Naive thymus-derived CD4-positive, alpha-beta T cell (primary cell): ENCODE measurements at regions of chr2 and their contacts with region 1.

Region 1: DNA sequence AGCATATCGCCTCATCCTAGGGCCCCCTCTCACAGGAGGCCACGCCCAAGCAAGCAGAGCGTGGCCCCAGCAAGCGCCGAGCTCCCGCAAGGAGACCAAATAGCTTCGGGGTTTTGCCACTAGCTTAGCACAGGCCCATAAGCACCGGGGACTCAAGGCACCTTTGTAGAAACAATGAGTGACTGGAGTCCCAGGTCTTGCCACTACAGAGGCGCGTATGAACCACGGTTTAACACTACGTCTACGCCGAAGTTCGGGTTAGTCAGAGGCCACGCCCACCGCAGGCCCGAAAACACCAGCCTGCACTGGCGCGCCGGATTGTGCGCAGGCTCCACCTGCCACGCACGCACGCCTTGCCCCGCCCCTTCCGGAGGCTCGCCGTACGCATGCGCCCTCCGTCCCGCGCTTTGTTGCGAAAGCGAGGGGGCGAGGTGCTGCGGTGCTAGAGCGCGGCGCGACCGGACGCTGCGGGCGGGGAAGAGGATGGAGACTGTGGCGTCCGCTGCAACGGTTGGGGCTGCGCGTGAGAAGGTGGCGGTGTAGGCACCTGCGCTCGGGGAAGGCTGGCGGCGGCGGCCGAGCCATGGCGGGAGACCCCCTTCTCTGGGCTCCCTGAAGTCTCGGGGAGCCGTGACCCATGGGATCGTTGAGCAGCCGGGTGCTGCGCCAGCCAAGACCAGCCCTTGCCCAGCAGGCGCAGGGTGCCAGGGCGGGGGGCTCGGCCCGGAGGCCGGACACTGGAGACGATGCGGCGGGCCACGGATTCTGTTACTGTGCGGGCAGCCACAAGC is at the start of gene GMCL1:
- DNase-seq: peak; percentile 98 to 100 (median 99)
- ATAC-seq: peak; percentile 97
- H3K4me3 ChIP-seq: peak within 1 kb of the TSS; percentile 81
- H3K4me3 Mint-ChIP-seq: peak within 1 kb of the TSS; percentile 83 to 97 (median 94)
- H3K27ac ChIP-seq: peak within 1 kb of the TSS; percentile 88
- H3K27ac Mint-ChIP-seq: peak within 1 kb of the TSS; percentile 89 to 97 (median 95)
- H3K4me1 ChIP-seq: peaks cover 10 to 17% of the 10 kb centered on the region in 2 donors
- H3K4me1 Mint-ChIP-seq: peaks cover 31 to 61% (median 54%) of the 10 kb centered on the region in 7 donors
- H3K27me3 ChIP-seq: no peaks in the 10 kb centered on the region
- H3K27me3 Mint-ChIP-seq: no peaks in the 10 kb centered on the region
- total RNA-seq, gene GMCL1: 24.9 to 30.5 (median 27.3) TPM

Region 2: DNA sequence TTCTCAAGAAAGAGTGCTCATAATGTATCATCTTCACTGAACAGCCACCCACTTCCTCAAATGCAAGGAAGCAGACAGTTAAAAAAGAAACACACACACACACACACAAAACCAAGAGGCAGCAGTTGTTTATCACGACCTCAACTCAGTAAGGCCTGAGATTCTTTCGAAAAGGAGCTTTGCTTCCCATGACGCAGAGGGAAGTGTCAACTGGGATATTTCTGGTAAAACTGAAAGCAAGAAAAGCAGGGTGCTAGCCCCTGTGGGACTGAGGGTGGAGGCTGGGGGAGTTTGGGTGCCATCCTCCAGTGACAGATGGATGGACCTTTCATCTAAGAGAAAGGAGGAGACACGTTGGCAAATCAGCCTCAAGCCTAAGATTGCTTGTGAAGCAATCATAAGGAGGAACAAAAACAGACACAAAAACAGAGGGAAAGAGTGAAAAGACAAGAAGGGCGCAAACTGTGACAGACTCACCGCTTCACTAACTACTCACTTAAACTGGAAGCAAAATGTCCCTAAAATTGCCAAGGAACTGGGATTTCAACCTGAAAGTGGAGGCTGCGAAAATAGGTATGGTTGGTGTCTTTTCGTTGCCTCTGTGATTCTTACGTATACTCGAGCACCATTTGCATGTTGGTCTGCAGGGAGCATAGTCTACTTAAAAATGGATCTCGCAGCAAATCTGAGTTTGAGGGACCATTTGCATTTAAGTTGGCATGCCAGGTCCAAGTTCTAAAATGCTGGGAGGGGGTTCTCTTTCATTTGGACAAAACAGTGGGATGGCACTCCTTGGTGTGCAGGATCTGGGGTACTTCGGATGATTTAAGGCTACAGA is 1094.5 kb before region 1 on chr2 and contains the start of gene ARHGAP25:
- CTCF ChIA-PET with region 1: no interaction called
- POLR2A ChIA-PET with region 1: no interaction called
- intact Hi-C with region 1: loop called in 1 of 2 experiments (anchors 5 kb)
- DNase-seq: peak; percentile 20 to 81 (median 69)
- ATAC-seq: peak; percentile 78
- H3K4me3 ChIP-seq: peak within 1 kb of the TSS; percentile 77
- H3K4me3 Mint-ChIP-seq: no peak within 1 kb of the TSS
- H3K27ac ChIP-seq: peak within 1 kb of the TSS; percentile 78
- H3K27ac Mint-ChIP-seq: no peak within 1 kb of the TSS
- H3K4me1 ChIP-seq: peaks cover 38 to 48% of the 10 kb centered on the region in 2 donors
- H3K4me1 Mint-ChIP-seq: peaks cover 23 to 37% (median 32%) of the 10 kb centered on the region in 7 donors
- H3K27me3 ChIP-seq: no peaks in the 10 kb centered on the region
- H3K27me3 Mint-ChIP-seq: no peaks in the 10 kb centered on the region
- total RNA-seq, gene ARHGAP25: 68.2 to 139 (median 116) TPM

Region 3: DNA sequence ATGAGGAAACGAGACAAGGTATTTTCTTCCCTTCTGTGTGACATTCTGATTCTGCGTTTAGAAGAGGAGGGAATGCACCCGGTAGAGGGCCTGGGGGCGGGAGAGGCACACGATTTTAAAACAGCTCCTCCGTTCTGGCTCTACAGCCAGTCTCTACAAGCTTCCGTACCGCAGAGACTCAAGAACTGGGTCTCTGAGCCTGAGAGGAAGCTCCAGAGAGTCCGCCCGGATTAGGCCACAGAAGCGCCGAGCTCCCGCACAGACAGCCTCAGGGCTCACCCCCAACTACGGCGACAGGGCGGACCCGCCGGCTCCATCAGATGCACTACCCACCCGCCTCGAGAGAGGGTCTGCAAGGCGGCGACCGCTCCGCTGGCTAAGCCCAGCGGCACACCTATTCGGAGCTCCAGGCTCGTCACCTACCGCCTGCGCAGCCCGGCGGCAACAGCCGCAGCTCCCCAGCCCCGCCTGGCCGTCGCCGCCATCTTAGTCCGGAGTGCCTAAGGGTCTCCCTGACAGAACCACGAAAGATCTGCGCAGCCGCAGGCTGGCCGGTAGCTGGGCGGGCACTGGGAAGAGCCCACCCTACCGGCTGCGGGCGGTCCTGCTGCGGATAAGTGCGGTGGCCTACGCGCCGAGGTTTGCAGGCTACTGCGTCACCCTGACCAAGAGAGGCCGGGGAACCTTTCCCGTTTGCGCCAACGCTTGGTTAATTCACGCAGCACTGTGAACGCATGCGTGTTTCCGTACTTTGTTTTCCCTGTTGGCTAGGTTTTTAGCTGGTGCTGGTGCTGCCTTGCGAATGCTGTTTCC is 392.3 kb before region 1 on chr2 and contains the start of gene NFU1:
- CTCF ChIA-PET with region 1: interaction called, 3 read pairs
- POLR2A ChIA-PET with region 1: no interaction called
- intact Hi-C with region 1: loop called in 1 of 2 experiments (anchors 2 kb)
- DNase-seq: peak; percentile 76 to 89 (median 85)
- ATAC-seq: peak; percentile 91
- H3K4me3 ChIP-seq: peak within 1 kb of the TSS; percentile 68
- H3K4me3 Mint-ChIP-seq: peak within 1 kb of the TSS; percentile 92 to 100 (median 94)
- H3K27ac ChIP-seq: peak within 1 kb of the TSS; percentile 98
- H3K27ac Mint-ChIP-seq: peak within 1 kb of the TSS; percentile 97 to 100 (median 99)
- H3K4me1 ChIP-seq: peaks cover 18 to 21% of the 10 kb centered on the region in 2 donors
- H3K4me1 Mint-ChIP-seq: peaks cover 14 to 48% (median 40%) of the 10 kb centered on the region in 7 donors
- H3K27me3 ChIP-seq: no peaks in the 10 kb centered on the region
- H3K27me3 Mint-ChIP-seq: no peaks in the 10 kb centered on the region
- total RNA-seq, gene NFU1: 16.1 to 25.8 (median 22.6) TPM

Region 4: GRCh38 chr2:69774984-69775982 is 54.2 kb before region 1 on chr2:
- CTCF ChIA-PET with region 1: no interaction called
- POLR2A ChIA-PET with region 1: no interaction called
- intact Hi-C with region 1: loop called in 1 of 2 experiments (anchors 2 kb)
- DNase-seq: peak in 8 of 9 donors; percentile 34 to 73 (median 51)
- ATAC-seq: peak; percentile 84
- H3K4me3 ChIP-seq: peak overlapping the region; percentile 3
- H3K4me3 Mint-ChIP-seq: peak overlapping the region; percentile 17 to 82 (median 61)
- H3K27ac ChIP-seq: peak overlapping the region; percentile 8
- H3K27ac Mint-ChIP-seq: peak overlapping the region; percentile 29 to 90 (median 61)
- H3K4me1 ChIP-seq: peaks cover 14 to 16% of the 10 kb centered on the region in 2 donors
- H3K4me1 Mint-ChIP-seq: peaks cover 13 to 55% (median 24%) of the 10 kb centered on the region in 7 donors
- H3K27me3 ChIP-seq: no peaks in the 10 kb centered on the region
- H3K27me3 Mint-ChIP-seq: no peaks in the 10 kb centered on the region

Region 5: GRCh38 chr2:69893684-69894551 is 64.5 kb after region 1 on chr2 and contains the start of gene SNRNP27:
- CTCF ChIA-PET with region 1: no interaction called
- POLR2A ChIA-PET with region 1: interaction called, 3 read pairs
- intact Hi-C with region 1: loop called (anchors 1 to 5 kb)
- DNase-seq: peak; percentile 62 to 84 (median 77)
- ATAC-seq: peak; percentile 90
- H3K4me3 ChIP-seq: peak within 1 kb of the TSS; percentile 67
- H3K4me3 Mint-ChIP-seq: peak within 1 kb of the TSS; percentile 90 to 100 (median 99)
- H3K27ac ChIP-seq: peak within 1 kb of the TSS; percentile 91
- H3K27ac Mint-ChIP-seq: peak within 1 kb of the TSS; percentile 93 to 100 (median 99)
- H3K4me1 ChIP-seq: peaks cover 12 to 17% of the 10 kb centered on the region in 2 donors
- H3K4me1 Mint-ChIP-seq: peaks cover 12 to 56% (median 43%) of the 10 kb centered on the region in 7 donors
- H3K27me3 ChIP-seq: no peaks in the 10 kb centered on the region
- H3K27me3 Mint-ChIP-seq: no peaks in the 10 kb centered on the region
- total RNA-seq, gene SNRNP27: 32.5 to 56.0 (median 51.5) TPM

Region 6: GRCh38 chr2:69933839-69934613 is 104.6 kb after region 1 on chr2:
- CTCF ChIA-PET with region 1: no interaction called
- POLR2A ChIA-PET with region 1: no interaction called
- intact Hi-C with region 1: no loop called
- DNase-seq: no peak
- ATAC-seq: peak; percentile 75
- H3K4me3 ChIP-seq: no peak overlapping the region
- H3K4me3 Mint-ChIP-seq: no peak overlapping the region
- H3K27ac ChIP-seq: no peak overlapping the region
- H3K27ac Mint-ChIP-seq: peak overlapping the region in 6 of 9 donors; percentile 3 to 71 (median 59)
- H3K4me1 ChIP-seq: peaks cover 0 to 9% of the 10 kb centered on the region in 2 donors
- H3K4me1 Mint-ChIP-seq: peaks cover 22 to 43% (median 41%) of the 10 kb centered on the region in 7 donors
- H3K27me3 ChIP-seq: no peaks in the 10 kb centered on the region
- H3K27me3 Mint-ChIP-seq: no peaks in the 10 kb centered on the region

Region 7: DNA sequence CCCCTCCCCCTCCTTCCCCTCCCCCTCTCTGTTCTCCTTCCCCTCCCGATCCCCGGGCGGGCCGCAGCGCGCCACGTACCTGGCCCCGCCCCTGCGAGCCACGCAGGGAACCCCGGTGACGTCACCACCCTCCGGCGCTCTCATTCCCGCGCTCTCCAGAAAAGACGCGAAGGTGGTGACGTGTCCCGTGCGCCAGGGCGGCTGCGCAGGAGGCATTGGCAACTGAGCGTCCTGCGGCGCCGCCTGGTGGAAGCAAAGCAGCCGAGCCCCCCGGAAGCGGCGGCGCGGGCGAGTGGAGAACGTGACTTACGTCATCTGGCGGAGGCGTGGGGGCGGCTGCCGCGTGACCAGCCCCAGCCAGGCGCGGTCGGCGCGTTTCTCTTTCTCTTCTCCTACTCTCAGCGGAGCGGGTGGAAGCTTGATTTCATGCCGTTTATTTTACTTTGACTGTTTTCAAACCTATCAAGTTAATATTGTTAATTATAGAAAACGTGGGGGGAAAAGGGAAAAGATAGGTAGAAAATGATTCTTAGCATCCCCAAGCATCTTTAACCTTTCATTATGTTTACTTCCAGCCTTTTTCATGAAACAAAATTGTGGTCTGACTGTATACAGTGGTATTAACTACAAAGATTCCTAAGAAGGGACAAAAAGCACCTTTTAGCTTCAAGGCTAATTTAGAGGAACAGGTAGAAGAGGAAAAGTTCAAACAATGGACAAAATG is 313.3 kb after region 1 on chr2:
- CTCF ChIA-PET with region 1: no interaction called
- POLR2A ChIA-PET with region 1: interaction called, 3 read pairs
- intact Hi-C with region 1: loop called (anchors 2 kb)
- DNase-seq: peak; percentile 99 to 100 (median 100)
- ATAC-seq: peak; percentile 85
- H3K4me3 ChIP-seq: peak overlapping the region; percentile 81
- H3K4me3 Mint-ChIP-seq: peak overlapping the region; percentile 83 to 96 (median 91)
- H3K27ac ChIP-seq: peak overlapping the region; percentile 97
- H3K27ac Mint-ChIP-seq: peak overlapping the region; percentile 97 to 99 (median 97)
- H3K4me1 ChIP-seq: peaks cover 27 to 39% of the 10 kb centered on the region in 2 donors
- H3K4me1 Mint-ChIP-seq: peaks cover 37 to 69% (median 55%) of the 10 kb centered on the region in 7 donors
- H3K27me3 ChIP-seq: no peaks in the 10 kb centered on the region
- H3K27me3 Mint-ChIP-seq: peaks cover 0 to 2% (median 0%) of the 10 kb centered on the region in 5 donors

Region 8: GRCh38 chr2:70248181-70248847 is 418.9 kb after region 1 on chr2 and contains the start of gene TIA1:
- CTCF ChIA-PET with region 1: no interaction called
- POLR2A ChIA-PET with region 1: no interaction called
- intact Hi-C with region 1: loop called in 1 of 2 experiments (anchors 2 kb)
- DNase-seq: peak; percentile 94 to 99 (median 98)
- ATAC-seq: peak; percentile 98
- H3K4me3 ChIP-seq: peak within 1 kb of the TSS; percentile 87
- H3K4me3 Mint-ChIP-seq: peak within 1 kb of the TSS; percentile 83 to 99 (median 95)
- H3K27ac ChIP-seq: peak within 1 kb of the TSS; percentile 95
- H3K27ac Mint-ChIP-seq: peak within 1 kb of the TSS; percentile 91 to 100 (median 97)
- H3K4me1 ChIP-seq: peaks cover 13 to 24% of the 10 kb centered on the region in 2 donors
- H3K4me1 Mint-ChIP-seq: peaks cover 23 to 48% (median 40%) of the 10 kb centered on the region in 7 donors
- H3K27me3 ChIP-seq: no peaks in the 10 kb centered on the region
- H3K27me3 Mint-ChIP-seq: peaks cover 0 to 4% (median 0%) of the 10 kb centered on the region in 5 donors
- total RNA-seq, gene TIA1: 80.9 to 244 (median 163) TPM